SK-N-SH (cell line): ENCODE measurements at regions of chr1 and their contacts with region 1.

Region 1: DNA sequence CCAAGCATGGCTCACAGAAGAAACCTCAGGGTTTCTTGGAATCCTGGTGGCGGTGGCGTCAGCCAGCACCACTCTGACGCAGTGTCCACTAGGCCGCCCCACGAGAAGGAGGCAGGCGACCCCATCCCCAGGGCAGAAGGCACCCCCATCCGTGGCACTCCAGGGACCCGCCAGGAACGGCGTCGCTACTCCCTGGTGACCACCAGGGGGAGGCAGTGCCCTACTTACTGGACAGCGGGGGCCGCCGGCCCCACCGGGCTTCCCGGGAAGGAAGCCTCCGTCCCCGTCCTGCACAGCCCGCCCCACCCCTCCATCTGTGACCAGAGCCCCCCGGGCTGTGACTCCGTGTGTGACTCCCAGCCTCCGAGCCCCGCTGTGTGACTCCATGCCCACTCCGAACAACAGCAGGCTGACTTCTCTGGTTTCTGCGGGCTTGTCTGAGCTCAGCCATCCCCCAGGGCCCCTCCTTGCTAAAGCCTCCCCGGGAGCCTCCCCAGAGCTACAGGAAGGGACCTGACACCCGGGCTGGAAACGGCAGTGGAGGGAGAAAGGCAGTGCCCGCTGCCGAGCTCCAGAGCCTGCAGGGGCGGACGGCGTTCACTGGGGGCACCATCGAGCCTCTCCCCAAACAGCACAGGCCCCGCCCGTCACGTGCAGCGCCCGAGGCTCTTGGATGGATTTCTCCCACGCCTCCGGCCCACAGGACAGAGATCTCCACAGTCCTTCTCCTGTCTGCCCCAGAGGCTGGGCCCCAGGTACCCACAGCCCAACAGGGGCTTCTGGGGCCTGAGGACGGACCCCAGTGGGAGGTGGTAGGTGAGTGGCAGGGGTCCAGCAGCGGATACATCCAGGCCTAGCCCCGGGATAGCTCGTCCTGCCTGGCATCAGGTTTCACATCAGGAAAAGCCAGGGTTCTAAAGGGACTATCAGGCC is 21.1 kb downstream of the KIF17 start:
- DNase-seq: peak; percentile 96
- H3K4me3 ChIP-seq: peak overlapping the region; percentile 49 to 70
- H3K27ac ChIP-seq: peak overlapping the region; percentile 56 to 95
- H3K4me1 ChIP-seq: peaks cover 3 to 21% of the 10 kb centered on the region in 2 experiments; a peak in 3 of 4 replicates
- H3K27me3 ChIP-seq: no peaks in the 10 kb centered on the region
- CTCF ChIP-seq: peak; percentile 86
- EP300 ChIP-seq: no peak
- RAD21 ChIP-seq: peak; percentile 89

Region 2: GRCh38 chr1:20717452-20718342 is 21.0 kb after region 1 on chr1 and contains the start of gene KIF17:
- CTCF ChIA-PET with region 1: interaction called, 12 read pairs
- POLR2A ChIA-PET with region 1: no interaction called
- DNase-seq: peak; percentile 93
- H3K4me3 ChIP-seq: peak within 1 kb of the TSS; percentile 51 to 59
- H3K27ac ChIP-seq: no peak within 1 kb of the TSS
- H3K4me1 ChIP-seq: peaks cover 0 to 2% of the 10 kb centered on the region in 2 experiments; a peak in 1 of 4 replicates
- H3K27me3 ChIP-seq: no peaks in the 10 kb centered on the region
- CTCF ChIP-seq: no peak
- EP300 ChIP-seq: no peak
- RAD21 ChIP-seq: no peak
- polyA plus RNA-seq, gene KIF17: 4.1 and 4.3 TPM in 2 replicates

Region 3: DNA sequence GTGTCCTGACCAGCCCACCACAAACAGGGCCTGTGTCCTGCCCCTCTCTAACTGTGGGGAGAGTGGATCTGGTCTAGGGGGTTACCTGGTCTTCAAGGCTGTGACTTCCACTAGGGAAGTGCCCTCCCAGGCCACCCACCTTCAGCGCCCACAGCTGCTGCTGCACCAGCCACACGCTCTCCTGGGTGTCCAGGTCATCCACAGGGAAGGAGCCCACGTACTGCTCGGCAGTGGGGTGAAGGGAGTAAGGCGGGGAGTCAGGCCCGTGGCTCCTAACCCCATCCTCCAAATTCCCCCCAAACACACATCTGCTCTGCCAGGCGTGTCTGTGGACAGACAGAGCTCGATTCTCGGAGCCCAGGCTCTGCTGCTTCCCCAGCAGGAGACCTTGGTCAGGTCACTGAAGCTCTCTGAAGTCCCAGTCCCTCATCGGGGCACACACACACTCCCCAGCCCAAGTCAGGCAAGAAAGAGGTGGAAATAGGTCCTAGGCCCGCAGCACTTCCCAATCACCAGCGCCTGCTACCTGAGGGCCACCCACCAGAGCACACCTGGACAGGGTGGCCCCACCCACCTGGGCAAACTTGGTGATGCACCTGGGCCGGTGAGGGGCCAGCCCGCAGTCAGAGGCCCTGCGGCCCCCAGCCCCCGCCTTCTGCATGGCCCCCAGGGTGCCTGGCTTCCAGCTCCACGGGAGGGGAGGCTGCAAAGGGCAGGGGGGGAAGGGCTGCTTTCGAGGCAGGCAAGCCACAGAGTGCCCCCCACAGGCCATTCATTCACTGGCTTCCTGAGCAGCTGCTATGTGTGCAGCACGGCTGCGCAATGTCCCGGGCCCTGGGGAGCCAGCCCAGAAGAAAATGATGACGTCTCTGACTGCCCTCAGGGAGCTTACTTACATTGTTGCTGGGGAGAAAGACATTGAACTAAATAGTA is 31.0 kb after region 1 on chr1:
- CTCF ChIA-PET with region 1: interaction called, 15 read pairs
- POLR2A ChIA-PET with region 1: no interaction called
- DNase-seq: peak; percentile 57
- H3K4me3 ChIP-seq: no peak overlapping the region
- H3K27ac ChIP-seq: no peak overlapping the region
- H3K4me1 ChIP-seq: peaks cover 5 to 8% of the 10 kb centered on the region in 2 experiments; a peak in 2 of 4 replicates
- H3K27me3 ChIP-seq: no peaks in the 10 kb centered on the region
- CTCF ChIP-seq: no peak
- EP300 ChIP-seq: no peak
- RAD21 ChIP-seq: no peak

Region 4: GRCh38 chr1:21192284-21192683 is 495.6 kb after region 1 on chr1:
- CTCF ChIA-PET with region 1: interaction called, 127 read pairs
- POLR2A ChIA-PET with region 1: interaction called, 6 read pairs
- DNase-seq: no peak
- H3K4me3 ChIP-seq: no peak overlapping the region
- H3K27ac ChIP-seq: no peak overlapping the region
- H3K4me1 ChIP-seq: peaks cover 0 to 6% of the 10 kb centered on the region in 2 experiments; a peak in 2 of 4 replicates
- H3K27me3 ChIP-seq: no peaks in the 10 kb centered on the region
- CTCF ChIP-seq: no peak
- EP300 ChIP-seq: no peak
- RAD21 ChIP-seq: no peak